Activated naive CD4-positive, alpha-beta T cell treated with anti-CD3 and anti-CD28 coated beads for 36 hours (primary cell): ENCODE measurements at regions of chr17 and their contacts with region 1.

Region 1: GRCh38 chr17:69723742-69724141 is 309.2 kb downstream of the MAP2K6 start:
- DNase-seq: no peak
- H3K4me3 Mint-ChIP-seq: no peak overlapping the region
- H3K27ac Mint-ChIP-seq: no peak overlapping the region
- H3K4me1 Mint-ChIP-seq: no peaks in the 10 kb centered on the region
- H3K27me3 Mint-ChIP-seq: no peaks in the 10 kb centered on the region

Region 2: DNA sequence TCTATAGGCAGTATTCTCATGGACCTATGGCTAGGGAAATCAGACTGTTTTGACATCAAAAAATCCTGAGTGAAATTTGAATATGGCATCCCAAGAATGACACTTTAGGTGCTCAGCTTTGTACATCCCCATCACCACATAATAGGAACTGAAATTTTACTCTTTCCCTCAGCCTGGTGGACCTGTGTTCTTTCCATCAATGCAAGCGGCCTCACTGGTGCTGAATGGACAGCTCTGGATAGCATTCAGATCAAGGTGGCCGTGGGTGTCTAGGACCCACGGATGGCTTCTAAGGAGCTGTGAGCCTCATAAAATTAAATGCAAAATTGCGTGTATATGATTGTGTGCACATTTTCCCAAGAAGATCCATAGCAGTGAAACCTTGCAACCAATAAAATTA is 156.6 kb before region 1 on chr17:
- CTCF ChIA-PET with region 1: no interaction called
- intact Hi-C with region 1: loop called (anchors 10 kb)
- DNase-seq: no peak
- H3K4me3 Mint-ChIP-seq: no peak overlapping the region
- H3K27ac Mint-ChIP-seq: no peak overlapping the region
- H3K4me1 Mint-ChIP-seq: no peaks in the 10 kb centered on the region
- H3K27me3 Mint-ChIP-seq: peaks cover 5% of the 10 kb centered on the region

Region 3: GRCh38 chr17:69743091-69743490 is 19.3 kb after region 1 on chr17:
- CTCF ChIA-PET with region 1: no interaction called
- intact Hi-C with region 1: no loop called
- DNase-seq: no peak
- H3K4me3 Mint-ChIP-seq: no peak overlapping the region
- H3K27ac Mint-ChIP-seq: no peak overlapping the region
- H3K4me1 Mint-ChIP-seq: no peaks in the 10 kb centered on the region
- H3K27me3 Mint-ChIP-seq: peaks cover 7% of the 10 kb centered on the region

Region 4: DNA sequence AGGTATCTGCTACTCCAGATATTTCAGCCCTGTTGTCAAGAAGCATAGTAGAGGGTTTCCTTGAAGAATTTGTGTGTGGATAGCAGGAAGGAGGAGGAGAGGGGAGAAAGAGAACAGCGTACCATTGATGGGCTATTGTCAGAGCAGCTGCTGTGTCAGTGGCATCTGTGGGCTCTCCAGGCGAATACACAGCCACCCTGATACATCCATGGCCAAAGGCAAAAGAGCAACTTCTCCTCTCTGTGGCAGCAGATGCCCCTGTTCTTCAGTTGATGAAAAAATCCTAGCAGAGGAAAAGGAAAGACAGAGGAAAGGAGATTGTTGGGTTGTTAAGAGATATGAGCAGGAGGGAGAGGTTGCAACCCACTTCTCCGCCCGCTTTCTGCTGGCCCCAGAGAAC is 433.4 kb after region 1 on chr17:
- CTCF ChIA-PET with region 1: no interaction called
- intact Hi-C with region 1: no loop called
- DNase-seq: no peak
- H3K4me3 Mint-ChIP-seq: no peak overlapping the region
- H3K27ac Mint-ChIP-seq: no peak overlapping the region
- H3K4me1 Mint-ChIP-seq: no peaks in the 10 kb centered on the region
- H3K27me3 Mint-ChIP-seq: peaks cover 17% of the 10 kb centered on the region